A549 (cell line): ENCODE measurements at regions of chr15 and their contacts with region 1.

Region 1: GRCh38 chr15:98311566-98312188 is 336.7 kb upstream of the IGF1R start:
- DNase-seq: peak; percentile 80
- ATAC-seq: peak; percentile 62 to 86; a peak in 5 of 6 replicates
- H3K4me3 ChIP-seq: no peak overlapping the region
- H3K27ac ChIP-seq: no peak overlapping the region
- H3K4me1 ChIP-seq: no peaks in the 10 kb centered on the region
- CTCF ChIP-seq: peak; percentile 93
- EP300 ChIP-seq: no peak
- POLR2A ChIP-seq: no peak
- RAD21 ChIP-seq: peak; percentile 69 to 73

Region 2: GRCh38 chr15:98292442-98293240 is 19.0 kb before region 1 on chr15:
- CTCF ChIA-PET with region 1: interaction called, 10 read pairs
- POLR2A ChIA-PET with region 1: no interaction called
- DNase-seq: peak; percentile 56 to 74
- ATAC-seq: peak; percentile 84 to 97
- H3K4me3 ChIP-seq: no peak overlapping the region
- H3K27ac ChIP-seq: no peak overlapping the region
- H3K4me1 ChIP-seq: no peaks in the 10 kb centered on the region
- CTCF ChIP-seq: peak; percentile 66
- EP300 ChIP-seq: no peak
- POLR2A ChIP-seq: no peak
- RAD21 ChIP-seq: peak; percentile 34 to 36; a peak in 3 of 5 replicates

Region 3: DNA sequence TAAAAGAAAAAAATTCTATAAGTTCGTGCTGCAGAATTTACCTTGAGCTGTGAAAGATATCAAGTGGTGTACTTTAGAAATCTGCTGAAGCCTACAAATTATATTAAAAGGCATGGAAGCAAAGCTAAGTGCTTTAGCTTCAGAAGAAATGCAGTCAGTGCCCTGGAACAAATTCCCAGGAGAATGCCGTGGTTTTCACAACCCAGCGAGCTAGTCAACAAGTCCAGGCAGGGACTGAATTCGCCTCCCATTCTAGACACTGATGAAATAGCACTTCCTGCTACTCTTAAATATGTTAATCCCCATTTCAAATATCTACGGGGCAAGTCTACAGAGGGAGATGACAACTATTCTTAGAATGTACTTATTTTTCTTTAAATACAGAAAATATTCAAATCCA is 10.2 kb after region 1 on chr15:
- CTCF ChIA-PET with region 1: interaction called, 15 read pairs
- POLR2A ChIA-PET with region 1: no interaction called
- DNase-seq: no peak
- ATAC-seq: no peak
- H3K4me3 ChIP-seq: no peak overlapping the region
- H3K27ac ChIP-seq: no peak overlapping the region
- H3K4me1 ChIP-seq: no peaks in the 10 kb centered on the region
- CTCF ChIP-seq: no peak
- EP300 ChIP-seq: no peak
- POLR2A ChIP-seq: no peak
- RAD21 ChIP-seq: no peak

Region 4: DNA sequence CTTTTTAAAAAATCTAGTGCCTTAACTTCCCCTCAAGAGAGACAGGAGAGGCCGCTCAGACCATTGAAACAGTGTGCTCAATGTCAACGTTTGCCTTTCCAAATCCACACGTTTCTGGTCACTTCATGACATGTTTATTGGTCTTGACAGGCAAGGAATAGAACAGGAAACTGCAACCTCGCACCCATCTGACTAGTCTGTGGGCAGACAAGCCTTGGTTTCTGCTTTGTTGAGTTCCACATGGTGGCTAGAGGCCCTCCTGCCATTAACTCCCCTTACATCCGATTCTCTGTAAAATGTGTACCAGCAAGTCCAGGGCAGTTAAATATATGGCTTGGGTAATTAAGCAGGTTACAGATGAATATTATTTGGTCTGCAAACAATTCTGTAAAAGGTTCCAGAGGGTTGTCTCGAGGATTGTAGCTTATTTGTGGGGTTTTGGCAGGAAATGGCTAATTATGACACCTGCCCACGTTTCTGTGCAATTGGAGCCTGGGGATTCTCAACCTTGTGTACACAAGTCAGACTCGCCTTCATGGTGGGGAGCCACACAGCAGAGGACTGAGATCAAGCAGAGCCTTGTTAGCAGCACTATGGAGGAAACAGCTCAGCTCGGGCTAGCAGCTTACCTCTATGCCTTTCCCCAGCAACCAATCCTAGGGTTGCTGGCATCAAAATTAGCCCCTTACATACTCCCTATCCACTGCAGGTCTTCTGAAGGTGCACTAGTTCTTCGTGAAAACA is 19.2 kb after region 1 on chr15:
- CTCF ChIA-PET with region 1: interaction called, 15 read pairs
- POLR2A ChIA-PET with region 1: no interaction called
- DNase-seq: no peak
- ATAC-seq: no peak
- H3K4me3 ChIP-seq: no peak overlapping the region
- H3K27ac ChIP-seq: no peak overlapping the region
- H3K4me1 ChIP-seq: no peaks in the 10 kb centered on the region
- CTCF ChIP-seq: no peak
- EP300 ChIP-seq: no peak
- POLR2A ChIP-seq: no peak
- RAD21 ChIP-seq: no peak

Region 5: GRCh38 chr15:98421419-98422129 is 109.9 kb after region 1 on chr15:
- CTCF ChIA-PET with region 1: interaction called, 185 read pairs
- POLR2A ChIA-PET with region 1: interaction called, 4 read pairs
- DNase-seq: peak; percentile 54 to 87
- ATAC-seq: peak; percentile 67 to 90
- H3K4me3 ChIP-seq: peak overlapping the region; percentile 34
- H3K27ac ChIP-seq: no peak overlapping the region
- H3K4me1 ChIP-seq: peaks cover 12% of the 10 kb centered on the region; the same call in 2 of the 3 replicates
- CTCF ChIP-seq: peak; percentile 99
- EP300 ChIP-seq: no peak
- POLR2A ChIP-seq: no peak
- RAD21 ChIP-seq: peak; percentile 95 to 99